Activated CD4-positive, alpha-beta T cell treated with anti-CD3 and anti-CD28 coated beads, Interleukin-2, amount 10 ng/mL, durations not matched to agents 24 days and 14 days (primary cell): ENCODE measurements at regions of chr12 and their contacts with region 1.

Region 1: DNA sequence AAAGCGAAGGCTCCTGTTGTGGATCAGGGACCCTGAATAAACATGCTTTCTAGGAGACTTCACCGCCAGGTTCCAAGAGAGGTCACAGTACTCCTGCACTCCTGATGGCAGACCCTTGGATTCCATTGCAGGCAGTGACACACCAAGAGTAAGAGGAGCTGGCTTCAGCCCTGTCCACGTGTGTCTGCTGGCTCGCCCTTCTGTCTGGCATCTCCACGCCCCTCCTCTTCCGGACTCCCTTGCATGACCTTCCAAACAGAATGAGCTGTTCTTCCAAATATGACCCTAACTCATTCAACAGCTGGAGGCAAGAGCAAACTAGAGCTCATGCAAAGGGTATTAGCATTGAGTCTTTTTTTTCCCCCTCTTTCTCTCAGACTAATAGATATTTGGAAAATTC is 233.0 kb upstream of the PLEKHG7 start:
- DNase-seq: no peak
- H3K4me3 Mint-ChIP-seq: no peak overlapping the region
- H3K27ac Mint-ChIP-seq: peak overlapping the region; percentile 66
- H3K4me1 Mint-ChIP-seq: peaks cover 26% of the 10 kb centered on the region
- H3K27me3 Mint-ChIP-seq: no peaks in the 10 kb centered on the region

Region 2: GRCh38 chr12:91382081-91382543 is 1087.7 kb before region 1 on chr12:
- intact Hi-C with region 1: loop called (anchors 10 kb)
- DNase-seq: peak; percentile 94
- H3K4me3 Mint-ChIP-seq: peak overlapping the region; percentile 84
- H3K27ac Mint-ChIP-seq: peak overlapping the region; percentile 39
- H3K4me1 Mint-ChIP-seq: peaks cover 7% of the 10 kb centered on the region
- H3K27me3 Mint-ChIP-seq: peaks cover 12% of the 10 kb centered on the region

Region 3: DNA sequence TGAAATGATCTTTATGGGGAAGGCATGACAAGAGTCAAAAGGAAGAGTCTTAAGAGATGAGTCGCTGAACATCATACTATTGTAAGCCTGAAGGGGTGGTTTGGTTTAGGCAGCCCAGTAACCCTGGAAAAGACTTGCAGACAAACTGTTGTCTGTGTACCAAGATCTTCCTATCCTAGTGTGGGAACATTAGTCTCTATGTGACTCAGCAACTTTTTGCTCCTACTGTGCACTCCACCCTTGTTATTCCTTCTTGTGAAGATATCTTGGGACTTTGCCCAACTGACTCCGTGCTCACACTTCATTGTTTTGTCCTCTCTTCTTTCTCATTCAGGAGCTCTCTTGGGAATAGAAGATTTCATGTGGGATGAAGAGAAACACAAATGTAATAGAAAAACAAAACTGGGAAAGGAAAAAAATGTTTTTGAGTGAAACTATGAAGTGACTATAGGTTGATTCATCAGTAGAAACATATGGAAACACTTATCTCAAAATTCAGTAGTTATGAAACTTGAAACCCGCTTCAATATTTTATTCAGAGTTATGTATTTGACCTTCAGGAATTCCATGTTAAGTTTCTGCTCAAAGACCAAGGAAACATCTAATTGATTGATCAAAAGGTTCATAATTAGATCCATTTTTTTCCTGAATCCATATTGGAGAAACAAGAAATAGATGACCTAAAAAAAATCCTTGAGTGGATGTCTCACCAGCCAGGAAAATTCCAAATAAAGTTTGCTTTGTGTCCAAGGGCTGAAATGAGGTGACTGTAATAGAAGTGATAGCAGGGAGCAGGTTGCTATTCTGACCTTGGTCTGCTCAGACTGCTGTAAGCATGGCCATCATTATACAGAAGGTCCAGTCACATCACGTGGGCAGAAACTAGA is 391.4 kb before region 1 on chr12:
- intact Hi-C with region 1: loop called (anchors 1 kb)
- DNase-seq: no peak
- H3K4me3 Mint-ChIP-seq: peak overlapping the region; percentile 7
- H3K27ac Mint-ChIP-seq: peak overlapping the region; percentile 82
- H3K4me1 Mint-ChIP-seq: peaks cover 43% of the 10 kb centered on the region
- H3K27me3 Mint-ChIP-seq: no peaks in the 10 kb centered on the region

Region 4: DNA sequence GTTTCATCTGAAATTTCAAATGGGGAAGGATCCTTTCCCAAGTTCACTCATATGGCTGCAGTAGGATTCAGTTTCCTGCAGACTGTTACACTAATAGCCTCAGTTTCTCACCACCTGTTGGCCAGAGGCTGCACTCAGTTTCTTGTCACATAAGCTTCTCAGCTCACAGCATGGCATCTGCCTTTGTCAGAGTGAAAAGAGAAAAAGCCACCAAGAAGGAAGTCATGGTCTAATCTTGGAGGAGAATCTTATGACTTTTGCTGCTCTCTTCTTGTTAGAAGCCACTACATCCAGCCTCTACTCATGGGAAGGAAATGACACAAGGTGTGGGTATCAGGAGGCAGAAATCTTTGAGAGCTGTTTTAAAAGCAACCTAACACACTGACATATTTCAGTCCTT is 284.8 kb before region 1 on chr12:
- intact Hi-C with region 1: loop called (anchors 1 kb)
- DNase-seq: peak; percentile 85
- H3K4me3 Mint-ChIP-seq: peak overlapping the region; percentile 59
- H3K27ac Mint-ChIP-seq: peak overlapping the region; percentile 77
- H3K4me1 Mint-ChIP-seq: peaks cover 51% of the 10 kb centered on the region
- H3K27me3 Mint-ChIP-seq: no peaks in the 10 kb centered on the region

Region 5: DNA sequence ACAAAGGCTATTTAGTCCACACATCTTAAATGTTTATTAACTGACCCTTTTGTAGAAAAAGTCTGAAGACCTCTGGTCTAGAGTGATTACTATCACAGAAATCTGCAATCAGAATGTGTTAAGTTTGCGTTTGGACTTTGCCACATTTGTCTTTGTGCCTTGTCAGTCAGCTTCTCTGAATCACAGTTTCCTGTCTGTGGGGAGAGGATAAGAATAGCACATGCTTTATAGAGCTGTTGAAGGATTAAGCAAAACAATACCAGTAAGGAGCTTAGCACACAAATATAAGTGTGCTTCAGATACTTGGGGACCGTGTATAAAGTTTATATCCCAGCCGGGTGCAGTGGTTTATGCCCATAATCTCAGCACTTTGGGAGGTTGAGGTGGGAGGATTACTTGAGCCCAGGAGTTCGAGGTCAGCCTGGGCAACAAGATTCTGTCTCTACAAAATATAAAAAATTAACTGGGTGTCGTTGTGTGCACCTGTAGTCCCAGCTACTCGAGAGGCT is 261.2 kb before region 1 on chr12:
- intact Hi-C with region 1: loop called (anchors 1 kb)
- DNase-seq: peak; percentile 82
- H3K4me3 Mint-ChIP-seq: peak overlapping the region; percentile 66
- H3K27ac Mint-ChIP-seq: peak overlapping the region; percentile 94
- H3K4me1 Mint-ChIP-seq: peaks cover 36% of the 10 kb centered on the region
- H3K27me3 Mint-ChIP-seq: no peaks in the 10 kb centered on the region

Region 6: GRCh38 chr12:92551853-92552397 is 82.1 kb after region 1 on chr12:
- intact Hi-C with region 1: loop called (anchors 1 kb)
- DNase-seq: peak; percentile 71
- H3K4me3 Mint-ChIP-seq: no peak overlapping the region
- H3K27ac Mint-ChIP-seq: no peak overlapping the region
- H3K4me1 Mint-ChIP-seq: peaks cover 39% of the 10 kb centered on the region
- H3K27me3 Mint-ChIP-seq: no peaks in the 10 kb centered on the region

Region 7: GRCh38 chr12:92593734-92594402 is 124.0 kb after region 1 on chr12:
- intact Hi-C with region 1: loop called (anchors 1 kb)
- DNase-seq: peak; percentile 92
- H3K4me3 Mint-ChIP-seq: peak overlapping the region; percentile 71
- H3K27ac Mint-ChIP-seq: peak overlapping the region; percentile 99
- H3K4me1 Mint-ChIP-seq: peaks cover 57% of the 10 kb centered on the region
- H3K27me3 Mint-ChIP-seq: no peaks in the 10 kb centered on the region